Mammary epithelial cell (primary cell): ENCODE measurements at regions of chr11 and their contacts with region 1.

Region 1: DNA sequence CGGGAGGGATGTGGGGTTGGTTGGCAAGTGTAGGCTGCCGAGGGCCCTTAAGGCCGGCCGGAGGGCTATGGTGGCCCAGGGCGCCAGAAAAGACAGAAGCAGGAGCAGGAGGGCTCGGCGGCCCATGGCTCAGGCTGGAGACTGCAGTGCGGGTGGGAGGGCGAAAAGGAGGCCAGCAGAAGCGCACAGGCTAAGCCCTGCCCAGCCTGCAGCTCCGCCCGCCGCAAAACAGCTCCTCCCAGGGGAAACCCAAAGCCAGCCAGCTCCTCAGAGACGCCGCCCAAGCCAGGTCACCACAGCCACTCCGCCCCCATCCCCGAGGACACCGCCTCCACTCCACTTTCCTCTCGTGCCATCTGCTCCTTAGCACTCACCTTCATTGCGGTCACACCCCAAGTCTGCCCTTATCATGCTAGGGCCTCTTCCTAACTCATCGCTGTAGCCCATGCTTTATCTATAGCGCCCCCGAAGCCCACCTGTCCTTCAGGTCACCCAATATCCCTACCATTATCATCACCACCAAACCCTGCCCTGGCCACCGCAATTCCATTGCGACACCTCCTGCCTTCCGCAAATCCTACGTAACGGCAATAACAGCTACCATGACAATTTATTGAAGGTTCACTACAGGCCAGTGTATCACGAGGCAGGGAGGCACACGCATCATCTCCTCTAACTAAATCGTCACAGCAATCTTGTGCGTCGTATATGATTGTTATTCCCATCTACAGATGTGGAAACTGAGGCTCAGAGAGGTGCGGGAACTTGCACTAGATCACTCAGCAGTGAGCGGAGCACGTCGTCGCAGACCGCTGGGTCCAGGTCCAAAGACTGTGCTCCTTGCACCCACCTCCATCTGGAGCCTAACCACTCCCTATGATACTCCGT is at the start of gene PRCP:
- DNase-seq: peak; percentile 89
- H3K4me3 ChIP-seq: peak within 1 kb of the TSS; percentile 85 to 88 (median 86)
- H3K27ac ChIP-seq: peak within 1 kb of the TSS; percentile 83
- H3K4me1 ChIP-seq: peaks cover 15% of the 10 kb centered on the region
- H3K27me3 ChIP-seq: no peaks in the 10 kb centered on the region
- CTCF ChIP-seq: no peak
- total RNA-seq, gene PRCP: 25.5 to 31.8 TPM

Region 2: DNA sequence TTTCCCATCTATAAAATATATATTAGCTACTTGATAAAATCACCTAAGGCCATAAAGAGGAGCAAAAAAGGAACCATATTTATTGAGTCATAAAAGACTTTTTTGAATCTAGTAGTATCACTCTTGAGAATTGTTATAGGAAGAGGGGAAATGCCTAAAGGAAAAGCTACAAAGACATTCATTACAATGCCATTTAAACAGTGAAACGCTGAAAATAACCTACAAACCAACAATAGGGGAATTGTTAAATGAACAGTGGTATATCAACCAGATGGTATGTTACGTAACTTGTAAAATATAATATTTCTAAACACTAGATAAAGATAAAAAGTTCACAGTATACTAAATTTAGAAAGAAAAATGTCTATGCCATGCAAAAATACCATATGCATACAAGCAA is 214.3 kb before region 1 on chr11:
- CTCF ChIA-PET with region 1: no interaction called
- dilution Hi-C with region 1: no loop called
- in situ Hi-C with region 1: no loop called
- intact Hi-C with region 1: no loop called
- DNase-seq: no peak
- H3K4me3 ChIP-seq: no peak overlapping the region
- H3K27ac ChIP-seq: no peak overlapping the region
- H3K4me1 ChIP-seq: no peaks in the 10 kb centered on the region
- H3K27me3 ChIP-seq: peaks cover 7% of the 10 kb centered on the region
- CTCF ChIP-seq: no peak

Region 3: DNA sequence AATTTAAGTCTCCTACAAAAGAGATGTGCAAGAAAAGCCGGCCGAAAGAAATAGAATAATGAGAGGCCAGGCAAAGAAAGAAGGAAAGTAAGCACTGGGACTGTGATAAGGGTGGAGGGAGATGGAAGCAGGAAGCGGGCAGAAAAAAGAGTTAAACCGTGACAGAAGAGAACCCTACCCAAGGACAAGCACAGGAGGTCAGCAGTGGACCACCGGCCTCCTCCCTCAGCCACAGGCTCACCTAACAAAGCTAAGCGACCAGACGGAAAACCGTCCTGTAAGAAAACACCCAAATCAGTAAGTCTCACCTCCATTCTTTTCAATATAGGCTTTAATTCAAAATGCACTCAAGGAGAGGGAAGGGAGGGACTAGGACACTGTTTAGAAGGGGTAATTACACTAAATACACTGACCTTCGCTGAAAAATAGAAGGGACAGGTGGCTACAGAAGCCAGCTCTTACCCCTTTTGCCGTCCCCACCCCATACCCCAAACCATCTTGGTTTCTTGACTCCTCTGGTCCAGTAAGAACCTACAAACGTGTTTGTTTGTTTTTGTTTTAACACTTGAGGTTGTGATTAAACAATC is 168.7 kb before region 1 on chr11:
- CTCF ChIA-PET with region 1: no interaction called
- dilution Hi-C with region 1: no loop called
- in situ Hi-C with region 1: no loop called
- intact Hi-C with region 1: no loop called
- DNase-seq: no peak
- H3K4me3 ChIP-seq: no peak overlapping the region
- H3K27ac ChIP-seq: no peak overlapping the region
- H3K4me1 ChIP-seq: peaks cover 11% of the 10 kb centered on the region
- H3K27me3 ChIP-seq: peaks cover 14% of the 10 kb centered on the region
- CTCF ChIP-seq: no peak

Region 4: GRCh38 chr11:82867495-82868082 is 32.9 kb before region 1 on chr11:
- CTCF ChIA-PET with region 1: interaction called, 21 read pairs
- dilution Hi-C with region 1: no loop called
- in situ Hi-C with region 1: no loop called
- intact Hi-C with region 1: loop called (anchors 1 kb)
- DNase-seq: peak; percentile 44
- H3K4me3 ChIP-seq: peak overlapping the region in 1 of 3 experiments; percentile 30
- H3K27ac ChIP-seq: no peak overlapping the region
- H3K4me1 ChIP-seq: peaks cover 14% of the 10 kb centered on the region
- H3K27me3 ChIP-seq: no peaks in the 10 kb centered on the region
- CTCF ChIP-seq: peak; percentile 51 to 60

Region 5: DNA sequence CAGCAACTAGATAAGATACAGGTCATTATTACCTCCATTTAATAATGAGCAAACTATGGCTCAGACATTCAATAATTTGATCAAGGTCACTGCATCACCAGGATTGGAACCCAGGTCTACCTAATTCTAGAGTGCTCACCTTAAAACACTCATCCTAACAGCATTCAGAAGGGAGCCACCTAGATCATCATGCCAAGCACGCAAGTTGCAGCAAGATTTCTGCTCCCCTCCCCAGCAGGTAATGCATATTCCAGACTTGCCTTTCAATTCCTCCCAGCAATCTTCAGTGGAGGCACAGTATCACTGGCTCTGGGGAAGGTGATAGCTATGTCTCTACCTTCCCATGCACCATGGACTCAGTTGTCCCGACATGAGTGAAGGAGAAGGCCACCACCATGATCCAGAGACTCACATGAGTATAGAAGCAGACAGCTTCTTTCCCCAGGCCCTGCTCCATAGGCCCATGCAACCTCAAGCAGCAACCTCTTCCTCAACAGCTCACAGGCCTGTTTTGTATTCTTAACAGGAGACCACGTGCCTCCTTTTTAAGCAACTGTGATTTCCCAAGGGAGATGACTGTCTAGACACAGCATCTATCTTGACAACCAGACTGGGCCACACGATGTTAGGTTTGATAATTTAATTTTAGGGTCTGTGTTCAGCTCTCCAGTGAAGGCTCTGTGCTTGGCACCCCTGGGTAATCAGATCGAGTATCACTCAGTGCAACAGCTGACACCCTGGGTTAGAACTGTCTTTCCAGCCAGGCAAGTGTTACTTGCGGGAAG is 134.7 kb after region 1 on chr11:
- CTCF ChIA-PET with region 1: no interaction called
- dilution Hi-C with region 1: no loop called
- in situ Hi-C with region 1: no loop called
- intact Hi-C with region 1: no loop called
- DNase-seq: peak; percentile 41
- H3K4me3 ChIP-seq: no peak overlapping the region
- H3K27ac ChIP-seq: no peak overlapping the region
- H3K4me1 ChIP-seq: peaks cover 26% of the 10 kb centered on the region
- H3K27me3 ChIP-seq: no peaks in the 10 kb centered on the region
- CTCF ChIP-seq: no peak

Region 6: DNA sequence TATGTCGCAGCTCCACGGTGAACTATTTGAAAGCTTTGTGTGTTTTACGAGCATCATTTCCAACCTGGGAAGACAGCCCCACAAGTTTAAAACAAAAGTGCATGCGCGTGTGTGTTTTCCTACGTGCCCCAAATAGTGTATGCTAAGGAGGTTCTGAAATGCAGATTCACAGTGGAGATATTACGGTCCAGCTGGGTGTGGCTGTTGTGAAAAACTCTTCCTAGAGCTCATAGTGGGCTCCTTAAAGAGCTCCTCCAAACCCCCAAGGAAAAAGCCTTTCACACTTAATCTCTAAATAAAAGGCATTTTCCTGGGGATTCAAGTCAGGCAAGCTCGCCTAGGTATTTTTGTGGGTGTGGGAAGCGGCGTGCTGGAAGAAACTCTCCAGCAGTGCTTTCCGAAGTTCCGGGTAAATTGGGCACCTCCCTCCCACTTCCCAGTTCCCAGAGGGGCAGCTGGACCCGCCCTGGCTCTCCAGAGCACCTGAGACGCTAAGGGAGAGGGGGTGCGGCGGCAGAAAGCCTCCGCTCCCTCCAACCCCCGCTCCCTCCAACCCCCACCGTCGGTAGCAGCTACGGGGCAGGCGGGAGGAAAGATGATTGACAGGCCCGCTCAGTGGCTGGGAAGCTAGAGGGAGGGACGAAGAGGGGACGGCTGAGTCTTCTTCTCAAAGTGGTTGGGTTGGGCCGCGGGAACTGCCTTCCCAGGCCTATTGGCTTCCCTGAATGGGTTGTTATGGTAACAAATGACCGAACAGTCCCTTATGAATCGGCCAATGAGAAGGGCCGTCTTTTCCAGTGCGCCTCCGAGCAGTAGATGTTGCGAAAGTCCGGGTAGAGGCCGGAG is 255.9 kb after region 1 on chr11:
- CTCF ChIA-PET with region 1: no interaction called
- dilution Hi-C with region 1: no loop called
- in situ Hi-C with region 1: loop called in 1 of 2 experiments (anchors 10 kb)
- intact Hi-C with region 1: loop called (anchors 2 kb)
- DNase-seq: peak; percentile 100
- H3K4me3 ChIP-seq: peak overlapping the region; percentile 51 to 89 (median 76)
- H3K27ac ChIP-seq: peak overlapping the region; percentile 91
- H3K4me1 ChIP-seq: peaks cover 22% of the 10 kb centered on the region
- H3K27me3 ChIP-seq: no peaks in the 10 kb centered on the region
- CTCF ChIP-seq: no peak

Region 7: DNA sequence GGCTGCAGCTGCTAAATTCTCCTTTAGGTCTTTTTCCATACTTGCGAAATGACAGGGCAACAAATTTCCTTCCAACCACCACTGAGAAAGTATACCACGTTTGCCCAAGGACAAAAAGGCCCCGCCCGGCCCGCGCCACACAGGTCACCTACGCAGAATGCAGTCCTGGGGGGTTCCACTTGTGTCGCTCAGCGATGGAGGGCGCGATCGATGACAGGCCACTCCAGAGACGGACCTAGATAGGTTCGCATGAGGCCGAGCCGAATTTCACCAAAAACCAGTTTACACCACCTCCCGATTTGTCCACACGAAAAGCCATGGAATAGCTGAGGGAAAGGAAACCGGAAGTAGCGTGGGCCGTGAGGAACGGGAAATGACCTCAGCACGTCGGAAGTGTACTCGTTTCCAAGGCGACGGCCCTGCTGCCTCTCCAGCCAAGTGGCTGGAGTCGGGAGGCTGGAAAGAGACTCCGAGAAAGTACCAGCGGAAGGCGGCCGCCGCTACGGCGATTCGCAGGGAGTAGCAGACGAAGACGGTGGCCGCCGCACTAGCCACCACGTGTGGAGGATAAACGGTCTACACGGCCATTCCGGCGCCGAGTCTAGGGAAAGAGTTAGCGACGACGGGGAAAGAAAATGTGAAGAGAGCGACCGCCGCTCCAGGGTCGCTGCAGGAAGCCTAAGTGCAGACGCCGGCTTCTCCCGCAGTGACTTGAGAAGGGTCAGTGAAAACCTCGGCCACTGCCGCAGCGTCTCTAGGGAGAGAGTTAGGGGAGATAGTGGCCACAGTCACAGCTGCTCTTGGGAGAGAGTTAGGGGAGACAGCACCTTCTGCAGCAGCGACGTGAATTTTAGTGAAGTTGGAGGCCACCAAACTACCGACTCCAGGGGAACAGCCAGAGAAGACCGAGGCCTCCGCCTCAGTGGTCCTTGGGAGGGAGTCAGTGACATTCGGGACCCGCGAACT is 293.1 kb after region 1 on chr11 and contains the start of gene ANKRD42:
- CTCF ChIA-PET with region 1: no interaction called
- dilution Hi-C with region 1: no loop called
- in situ Hi-C with region 1: no loop called
- intact Hi-C with region 1: loop called (anchors 1 kb)
- DNase-seq: peak; percentile 94
- H3K4me3 ChIP-seq: peak within 1 kb of the TSS; percentile 65 to 84 (median 82)
- H3K27ac ChIP-seq: peak within 1 kb of the TSS; percentile 92
- H3K4me1 ChIP-seq: peaks cover 25% of the 10 kb centered on the region
- H3K27me3 ChIP-seq: no peaks in the 10 kb centered on the region
- CTCF ChIP-seq: peak in 1 of 2 donors; percentile 2
- total RNA-seq, gene ANKRD42: 9.6 to 11.5 TPM

Region 8: DNA sequence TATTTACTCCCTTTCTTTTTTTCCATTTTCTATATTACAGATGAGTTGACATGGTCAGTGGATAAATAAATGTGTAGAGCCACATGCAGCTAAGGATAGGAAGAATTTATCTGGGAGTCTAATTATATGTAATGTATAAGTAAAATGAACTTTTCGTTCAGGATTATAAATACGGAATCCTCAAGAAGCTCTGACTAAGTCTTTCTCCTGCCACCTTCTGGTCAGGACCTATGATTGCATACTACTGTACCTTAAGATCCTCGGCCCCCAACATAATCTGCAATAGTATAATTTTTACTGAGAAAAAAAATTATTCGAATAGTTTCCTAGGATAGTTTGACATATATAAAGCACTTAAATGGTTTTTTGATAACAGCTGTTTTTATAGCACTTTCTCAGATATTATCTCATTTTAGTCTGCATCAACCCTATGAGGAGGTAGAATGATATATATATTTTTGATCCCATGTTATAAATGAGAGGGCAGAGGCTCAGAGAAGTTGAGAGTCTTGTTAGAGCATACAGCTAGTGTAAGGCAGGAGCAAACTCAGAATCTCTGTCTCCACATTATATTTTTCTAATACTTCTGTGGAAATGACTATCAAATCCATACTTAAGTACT is 349.6 kb after region 1 on chr11:
- CTCF ChIA-PET with region 1: no interaction called
- dilution Hi-C with region 1: no loop called
- in situ Hi-C with region 1: loop called (anchors 5 to 10 kb)
- intact Hi-C with region 1: no loop called
- DNase-seq: peak; percentile 20
- H3K4me3 ChIP-seq: no peak overlapping the region
- H3K27ac ChIP-seq: no peak overlapping the region
- H3K4me1 ChIP-seq: no peaks in the 10 kb centered on the region
- H3K27me3 ChIP-seq: no peaks in the 10 kb centered on the region
- CTCF ChIP-seq: peak; percentile 62 to 69

Region 9: GRCh38 chr11:83724008-83724461 is 823.5 kb after region 1 on chr11:
- CTCF ChIA-PET with region 1: interaction called, 5 read pairs
- dilution Hi-C with region 1: no loop called
- in situ Hi-C with region 1: no loop called
- intact Hi-C with region 1: loop called (anchors 5 kb)
- DNase-seq: peak; percentile 41
- H3K4me3 ChIP-seq: peak overlapping the region; percentile 30 to 55 (median 52)
- H3K27ac ChIP-seq: no peak overlapping the region
- H3K4me1 ChIP-seq: peaks cover 5% of the 10 kb centered on the region
- H3K27me3 ChIP-seq: no peaks in the 10 kb centered on the region
- CTCF ChIP-seq: peak; percentile 38 to 61